ENCODE measurements at regions of chr19 and their contacts with region 1.

Region 1: GRCh38 chr19:48391107-48391986 is at the start of gene KDELR1:
- DNase-seq: peak; percentile 56 to 85 (median 69)
- ATAC-seq: peak; percentile 79
- H3K4me3 ChIP-seq: peak within 1 kb of the TSS; percentile 89
- H3K4me3 Mint-ChIP-seq: peak within 1 kb of the TSS; percentile 94
- H3K27ac ChIP-seq: peak within 1 kb of the TSS; percentile 71 to 79
- H3K27ac Mint-ChIP-seq: peak within 1 kb of the TSS; percentile 93
- H3K4me1 ChIP-seq: peaks cover 57% of the 10 kb centered on the region
- H3K4me1 Mint-ChIP-seq: peaks cover 34% of the 10 kb centered on the region
- H3K27me3 ChIP-seq: peaks cover 31% of the 10 kb centered on the region in 2 experiments
- H3K27me3 Mint-ChIP-seq: peaks cover 29% of the 10 kb centered on the region
- CTCF ChIP-seq: peak; percentile 93
- total RNA-seq, gene KDELR1: 32.2 to 39.6 TPM

Region 2: GRCh38 chr19:48064509-48064908 is 326.8 kb before region 1 on chr19:
- CTCF ChIA-PET with region 1: no interaction called
- POLR2A ChIA-PET with region 1: no interaction called
- intact Hi-C with region 1: no loop called
- DNase-seq: no peak
- ATAC-seq: no peak
- H3K4me3 ChIP-seq: no peak overlapping the region
- H3K4me3 Mint-ChIP-seq: no peak overlapping the region
- H3K27ac ChIP-seq: no peak overlapping the region
- H3K27ac Mint-ChIP-seq: no peak overlapping the region
- H3K4me1 ChIP-seq: no peaks in the 10 kb centered on the region
- H3K4me1 Mint-ChIP-seq: no peaks in the 10 kb centered on the region
- H3K27me3 ChIP-seq: peaks cover 0 to 12% of the 10 kb centered on the region in 2 experiments
- H3K27me3 Mint-ChIP-seq: no peaks in the 10 kb centered on the region
- CTCF ChIP-seq: no peak

Region 3: GRCh38 chr19:48415395-48415794 is 24.0 kb after region 1 on chr19:
- CTCF ChIA-PET with region 1: interaction called, 10 read pairs
- POLR2A ChIA-PET with region 1: interaction called, 3 read pairs
- intact Hi-C with region 1: no loop called
- DNase-seq: peak; percentile 50 to 90 (median 68)
- ATAC-seq: peak; percentile 74
- H3K4me3 ChIP-seq: peak overlapping the region; percentile 49
- H3K4me3 Mint-ChIP-seq: peak overlapping the region; percentile 34
- H3K27ac ChIP-seq: no peak overlapping the region
- H3K27ac Mint-ChIP-seq: no peak overlapping the region
- H3K4me1 ChIP-seq: peaks cover 36% of the 10 kb centered on the region
- H3K4me1 Mint-ChIP-seq: peaks cover 29% of the 10 kb centered on the region
- H3K27me3 ChIP-seq: peaks cover 0 to 11% of the 10 kb centered on the region in 2 experiments
- H3K27me3 Mint-ChIP-seq: peaks cover 22% of the 10 kb centered on the region
- CTCF ChIP-seq: no peak

Region 4: DNA sequence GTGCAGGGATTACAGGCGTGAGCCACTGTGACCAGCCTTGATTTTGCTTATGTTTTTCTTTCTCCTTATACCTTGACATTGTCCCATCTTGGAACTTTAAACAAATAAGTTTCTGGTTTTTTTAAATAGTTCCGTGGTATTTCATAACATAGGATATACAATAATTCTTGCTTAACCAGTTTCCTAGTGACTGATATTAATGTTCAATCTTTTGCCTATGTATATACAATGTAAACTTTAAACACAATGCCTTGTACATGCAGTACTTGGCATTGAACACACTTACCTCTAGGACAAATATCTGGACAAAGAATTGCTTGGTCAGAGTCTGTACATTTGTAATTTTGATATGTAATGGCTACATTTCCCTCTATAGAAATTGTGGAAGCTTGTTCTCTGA is 190.8 kb after region 1 on chr19:
- CTCF ChIA-PET with region 1: no interaction called
- POLR2A ChIA-PET with region 1: no interaction called
- intact Hi-C with region 1: loop called in 1 of 2 experiments (anchors 5 kb)
- DNase-seq: no peak
- ATAC-seq: no peak
- H3K4me3 ChIP-seq: no peak overlapping the region
- H3K4me3 Mint-ChIP-seq: no peak overlapping the region
- H3K27ac ChIP-seq: no peak overlapping the region
- H3K27ac Mint-ChIP-seq: no peak overlapping the region
- H3K4me1 ChIP-seq: peaks cover 6% of the 10 kb centered on the region
- H3K4me1 Mint-ChIP-seq: peaks cover 5% of the 10 kb centered on the region
- H3K27me3 ChIP-seq: no peaks in the 10 kb centered on the region
- H3K27me3 Mint-ChIP-seq: peaks cover 5% of the 10 kb centered on the region
- CTCF ChIP-seq: no peak

Region 5: DNA sequence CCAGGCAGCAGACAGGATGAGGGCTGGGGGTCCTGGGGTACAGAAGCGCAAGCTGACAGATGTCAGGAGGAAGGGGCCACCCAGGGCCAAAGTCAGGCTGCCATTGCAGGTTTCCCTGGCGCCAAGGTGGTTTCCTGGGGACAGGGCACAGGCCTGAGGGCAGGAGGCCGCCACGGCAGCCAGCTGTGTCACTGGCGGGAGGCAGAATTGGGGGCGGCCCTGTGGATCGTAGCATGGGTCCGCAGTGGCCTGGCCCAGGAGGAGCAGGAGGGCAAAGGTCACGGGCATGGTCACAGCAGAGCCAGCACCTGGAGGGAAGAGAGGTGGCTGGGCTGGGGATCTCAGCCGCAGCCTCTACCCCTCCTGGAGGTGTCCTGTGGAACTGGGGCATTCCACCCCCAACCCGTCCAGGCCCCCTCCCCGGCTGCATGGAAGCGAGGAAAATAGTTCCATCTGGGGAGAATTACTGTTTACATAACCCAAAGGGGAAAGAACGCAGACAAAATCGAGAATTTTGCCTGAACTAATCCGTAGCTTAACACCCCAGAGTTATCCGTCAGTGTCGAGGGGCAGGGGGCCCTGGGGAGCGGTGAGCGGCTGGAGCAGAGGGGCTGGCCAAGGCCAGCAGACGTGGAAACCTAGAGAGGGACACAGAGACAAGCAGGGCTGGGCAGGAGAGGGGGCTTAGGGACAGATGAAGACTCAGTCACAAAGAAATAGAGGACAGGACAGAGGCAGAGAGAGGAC is 279.5 kb after region 1 on chr19:
- CTCF ChIA-PET with region 1: no interaction called
- POLR2A ChIA-PET with region 1: no interaction called
- intact Hi-C with region 1: no loop called
- DNase-seq: no peak
- ATAC-seq: no peak
- H3K4me3 ChIP-seq: no peak overlapping the region
- H3K4me3 Mint-ChIP-seq: no peak overlapping the region
- H3K27ac ChIP-seq: no peak overlapping the region
- H3K27ac Mint-ChIP-seq: no peak overlapping the region
- H3K4me1 ChIP-seq: peaks cover 9% of the 10 kb centered on the region
- H3K4me1 Mint-ChIP-seq: peaks cover 7% of the 10 kb centered on the region
- H3K27me3 ChIP-seq: no peaks in the 10 kb centered on the region
- H3K27me3 Mint-ChIP-seq: no peaks in the 10 kb centered on the region
- CTCF ChIP-seq: no peak

Measured in CD4-positive, alpha-beta T cell (primary cell).